K562 (cell line): ENCODE measurements at regions of chr7 and their contacts with region 1.

Region 1: GRCh38 chr7:111867348-111867931 is 305.1 kb upstream of the IMMP2L start:
- DNase-seq: no peak
- ATAC-seq: peak; percentile 72
- H3K4me3 ChIP-seq: no peak overlapping the region
- H3K27ac ChIP-seq: no peak overlapping the region
- H3K4me1 ChIP-seq: no peaks in the 10 kb centered on the region
- H3K27me3 ChIP-seq: peaks cover 0 to 4% of the 10 kb centered on the region in 2 experiments; a peak in 2 of 5 replicates
- CTCF ChIP-seq: no peak
- EP300 ChIP-seq: no peak
- POLR2A ChIP-seq: no peak
- RAD21 ChIP-seq: no peak

Region 2: GRCh38 chr7:112422842-112423496 is 555.5 kb after region 1 on chr7:
- CTCF ChIA-PET with region 1: no interaction called
- POLR2A ChIA-PET with region 1: no interaction called
- in situ Hi-C with region 1: no loop called
- intact Hi-C with region 1: loop called (anchors 10 kb)
- DNase-seq: peak; percentile 85 to 91 (median 89)
- ATAC-seq: peak; percentile 96
- H3K4me3 ChIP-seq: no peak overlapping the region
- H3K27ac ChIP-seq: peak overlapping the region; percentile 42
- H3K4me1 ChIP-seq: peaks cover 0 to 20% of the 10 kb centered on the region in 2 experiments; a peak in 4 of 5 replicates
- H3K27me3 ChIP-seq: no peaks in the 10 kb centered on the region
- CTCF ChIP-seq: no peak; a peak in 1 of 6 replicates
- EP300 ChIP-seq: peak; percentile 34
- POLR2A ChIP-seq: no peak
- RAD21 ChIP-seq: peak in 1 of 2 experiments; percentile 14; a peak in 1 of 4 replicates